ENCODE measurements at regions of chr12 and their contacts with region 1.

Region 1: GRCh38 chr12:57452937-57453509 is 2.1 kb upstream of the INHBE start:
- DNase-seq: peak; percentile 86
- ATAC-seq: peak; percentile 73
- H3K4me3 ChIP-seq: no peak overlapping the region
- H3K27ac ChIP-seq: peak overlapping the region; percentile 64
- H3K4me1 ChIP-seq: peaks cover 18% of the 10 kb centered on the region
- H3K27me3 ChIP-seq: no peaks in the 10 kb centered on the region
- CTCF ChIP-seq: peak; percentile 94

Region 2: DNA sequence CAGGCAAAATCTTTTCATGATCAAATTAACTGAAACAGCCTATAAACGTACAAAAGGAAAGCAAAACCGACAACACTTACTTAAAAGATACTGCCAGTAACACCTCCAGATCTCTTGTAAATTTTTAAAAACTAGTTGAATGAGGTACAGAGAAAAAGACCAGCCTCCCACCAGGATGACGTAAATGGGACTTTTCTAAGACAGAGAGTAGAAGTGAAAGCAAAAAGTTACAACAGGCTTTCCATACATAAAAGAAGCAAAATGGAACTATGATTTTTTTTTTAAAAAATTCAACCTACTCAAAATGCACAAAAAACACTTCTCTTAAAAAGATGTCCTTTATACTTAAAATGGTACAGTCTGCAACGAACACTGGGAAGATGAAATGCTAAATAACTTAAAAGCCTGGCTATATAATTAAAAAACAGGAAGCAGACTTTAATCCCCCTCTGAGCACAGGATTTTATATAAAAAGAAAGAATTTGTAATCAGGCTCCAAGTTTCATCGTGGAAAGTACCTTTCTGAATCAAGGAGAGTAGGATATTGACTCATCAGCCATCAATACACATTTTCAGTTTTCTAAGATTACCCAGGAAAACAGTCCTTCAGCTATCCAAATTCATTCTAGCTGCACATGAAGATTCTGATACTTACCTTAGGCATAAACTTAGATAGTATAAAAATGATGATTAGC is 388.9 kb before region 1 on chr12:
- CTCF ChIA-PET with region 1: no interaction called
- POLR2A ChIA-PET with region 1: no interaction called
- intact Hi-C with region 1: no loop called
- DNase-seq: no peak
- ATAC-seq: no peak
- H3K4me3 ChIP-seq: no peak overlapping the region
- H3K27ac ChIP-seq: no peak overlapping the region
- H3K4me1 ChIP-seq: no peaks in the 10 kb centered on the region
- H3K27me3 ChIP-seq: no peaks in the 10 kb centered on the region
- CTCF ChIP-seq: no peak

Region 3: GRCh38 chr12:57229634-57230380 is 223.2 kb before region 1 on chr12 and contains the start of gene SHMT2:
- CTCF ChIA-PET with region 1: interaction called, 18 read pairs
- POLR2A ChIA-PET with region 1: no interaction called
- intact Hi-C with region 1: no loop called
- DNase-seq: peak; percentile 97
- ATAC-seq: peak; percentile 82
- H3K4me3 ChIP-seq: peak within 1 kb of the TSS; percentile 88
- H3K27ac ChIP-seq: peak within 1 kb of the TSS; percentile 74
- H3K4me1 ChIP-seq: peaks cover 19% of the 10 kb centered on the region
- H3K27me3 ChIP-seq: no peaks in the 10 kb centered on the region
- CTCF ChIP-seq: no peak
- total RNA-seq, gene SHMT2: 210 and 263 TPM in 2 replicates

Region 4: GRCh38 chr12:57250541-57251324 is 202.3 kb before region 1 on chr12 and contains the start of gene STAC3:
- CTCF ChIA-PET with region 1: interaction called, 11 read pairs
- POLR2A ChIA-PET with region 1: no interaction called
- intact Hi-C with region 1: no loop called
- DNase-seq: no peak
- ATAC-seq: no peak
- H3K4me3 ChIP-seq: no peak within 1 kb of the TSS
- H3K27ac ChIP-seq: no peak within 1 kb of the TSS
- H3K4me1 ChIP-seq: no peaks in the 10 kb centered on the region
- H3K27me3 ChIP-seq: no peaks in the 10 kb centered on the region
- CTCF ChIP-seq: no peak
- total RNA-seq, gene STAC3: 1.4 and 1.8 TPM in 2 replicates

Region 5: DNA sequence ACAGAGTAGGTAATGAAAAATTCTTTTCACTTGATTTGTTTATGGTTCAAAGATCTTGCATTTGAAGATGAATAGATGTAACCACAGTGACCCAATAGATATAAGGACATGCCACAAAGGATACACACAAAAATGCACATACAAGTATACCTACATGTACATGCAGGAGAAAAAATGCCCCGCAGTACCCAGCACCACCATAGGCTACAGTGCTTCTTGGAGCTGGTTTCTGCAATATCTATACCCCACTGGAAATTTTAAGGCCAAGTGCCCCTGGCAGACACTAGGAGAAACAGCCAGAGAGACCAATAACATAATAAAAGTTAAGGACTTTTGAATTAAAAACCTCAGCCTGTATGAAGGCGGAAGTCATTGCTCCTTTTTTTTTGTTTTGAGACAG is 189.9 kb before region 1 on chr12:
- CTCF ChIA-PET with region 1: interaction called, 8 read pairs
- POLR2A ChIA-PET with region 1: no interaction called
- intact Hi-C with region 1: loop called (anchors 1 kb)
- DNase-seq: no peak
- ATAC-seq: no peak
- H3K4me3 ChIP-seq: no peak overlapping the region
- H3K27ac ChIP-seq: no peak overlapping the region
- H3K4me1 ChIP-seq: no peaks in the 10 kb centered on the region
- H3K27me3 ChIP-seq: no peaks in the 10 kb centered on the region
- CTCF ChIP-seq: no peak

Region 6: GRCh38 chr12:57309420-57309819 is 143.6 kb before region 1 on chr12:
- CTCF ChIA-PET with region 1: interaction called, 75 read pairs
- POLR2A ChIA-PET with region 1: no interaction called
- intact Hi-C with region 1: loop called (anchors 1 kb)
- DNase-seq: peak; percentile 84
- ATAC-seq: peak; percentile 89
- H3K4me3 ChIP-seq: peak overlapping the region; percentile 31; the same call in 1 of the 2 replicates
- H3K27ac ChIP-seq: peak overlapping the region; percentile 84
- H3K4me1 ChIP-seq: peaks cover 30% of the 10 kb centered on the region
- H3K27me3 ChIP-seq: no peaks in the 10 kb centered on the region
- CTCF ChIP-seq: no peak

Measured in PC-3 (cell line).